ENCODE measurements at regions of chr12 and their contacts with region 1.

Region 1: DNA sequence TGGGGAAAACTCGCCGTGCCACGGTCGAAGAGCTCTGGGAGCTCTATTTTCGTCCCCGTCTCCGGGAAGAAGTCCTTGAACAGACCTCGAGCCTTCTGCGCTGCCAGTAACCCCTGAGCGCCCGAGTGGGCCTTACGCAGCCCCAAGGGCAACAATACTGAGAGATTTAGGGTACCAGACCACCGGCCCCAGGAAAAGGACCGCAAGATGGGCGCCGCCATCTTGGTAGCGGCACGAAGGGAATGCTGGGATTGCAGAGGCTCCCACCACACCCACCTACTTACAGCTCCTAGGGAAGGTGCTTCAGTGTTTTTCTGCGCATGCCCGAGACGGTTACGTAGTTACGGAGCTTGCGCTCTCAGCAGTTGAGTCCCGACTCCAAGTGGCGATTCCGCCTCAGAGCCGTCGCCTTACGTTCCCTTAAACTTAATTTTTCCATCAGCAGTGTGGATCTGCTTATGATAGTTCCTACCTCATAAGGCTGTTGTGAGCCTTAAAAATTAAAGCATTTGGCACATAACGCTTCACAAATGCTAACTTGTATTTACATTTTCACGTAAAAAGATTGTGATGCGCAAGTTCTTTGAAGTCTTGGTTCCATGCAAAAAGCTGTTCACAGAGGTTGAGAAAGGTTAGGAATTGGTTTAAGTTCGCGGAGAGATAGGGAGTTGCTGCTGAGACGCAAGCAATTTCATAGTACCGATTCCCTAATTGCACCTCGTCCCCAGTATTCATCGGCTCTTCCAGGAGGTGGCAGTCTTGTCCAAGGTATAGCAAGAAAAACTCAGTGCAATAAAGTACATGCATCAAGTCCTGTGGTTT is at the start of gene YARS2:
- DNase-seq: peak; percentile 95
- H3K4me3 Mint-ChIP-seq: peak within 1 kb of the TSS; percentile 89
- H3K27ac Mint-ChIP-seq: peak within 1 kb of the TSS; percentile 92
- H3K4me1 Mint-ChIP-seq: peaks cover 16% of the 10 kb centered on the region
- H3K27me3 Mint-ChIP-seq: no peaks in the 10 kb centered on the region
- total RNA-seq, gene YARS2: 20.1 to 24.8 TPM

Region 2: DNA sequence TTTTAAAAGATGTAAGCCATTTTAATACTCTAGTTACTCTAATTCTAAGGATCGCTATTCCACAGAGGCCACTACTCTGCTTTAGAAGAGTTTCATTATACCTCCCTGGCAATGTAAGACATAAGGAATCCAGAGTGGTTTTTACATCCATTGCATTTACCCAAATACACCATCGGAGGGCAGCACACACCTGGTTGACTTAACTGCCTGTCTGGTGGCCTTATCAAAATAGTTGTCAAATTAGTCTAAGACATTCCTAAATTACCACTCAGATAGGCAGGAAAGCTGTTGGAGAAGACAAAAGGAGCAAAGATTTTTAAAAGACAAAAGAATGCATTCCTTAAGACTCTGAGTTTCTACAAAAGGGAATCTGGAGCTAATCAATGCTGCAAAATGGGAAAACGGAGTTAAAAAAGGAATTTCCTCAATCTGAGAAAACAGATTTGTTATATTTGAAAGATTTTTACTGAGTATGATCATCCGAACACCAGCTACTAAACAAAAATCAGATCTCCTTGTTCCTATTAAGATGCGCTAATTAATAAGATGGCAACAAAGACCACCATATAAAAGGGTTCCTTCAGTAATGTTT is 390.3 kb before region 1 on chr12:
- CTCF ChIA-PET with region 1: no interaction called
- intact Hi-C with region 1: loop called (anchors 1 kb)
- DNase-seq: peak; percentile 69
- H3K4me3 Mint-ChIP-seq: no peak overlapping the region
- H3K27ac Mint-ChIP-seq: no peak overlapping the region
- H3K4me1 Mint-ChIP-seq: no peaks in the 10 kb centered on the region
- H3K27me3 Mint-ChIP-seq: no peaks in the 10 kb centered on the region

Region 3: GRCh38 chr12:32586390-32586789 is 169.5 kb before region 1 on chr12:
- CTCF ChIA-PET with region 1: interaction called, 4 read pairs
- intact Hi-C with region 1: loop called (anchors 1 kb)
- DNase-seq: no peak
- H3K4me3 Mint-ChIP-seq: no peak overlapping the region
- H3K27ac Mint-ChIP-seq: no peak overlapping the region
- H3K4me1 Mint-ChIP-seq: peaks cover 48% of the 10 kb centered on the region
- H3K27me3 Mint-ChIP-seq: no peaks in the 10 kb centered on the region

Region 4: DNA sequence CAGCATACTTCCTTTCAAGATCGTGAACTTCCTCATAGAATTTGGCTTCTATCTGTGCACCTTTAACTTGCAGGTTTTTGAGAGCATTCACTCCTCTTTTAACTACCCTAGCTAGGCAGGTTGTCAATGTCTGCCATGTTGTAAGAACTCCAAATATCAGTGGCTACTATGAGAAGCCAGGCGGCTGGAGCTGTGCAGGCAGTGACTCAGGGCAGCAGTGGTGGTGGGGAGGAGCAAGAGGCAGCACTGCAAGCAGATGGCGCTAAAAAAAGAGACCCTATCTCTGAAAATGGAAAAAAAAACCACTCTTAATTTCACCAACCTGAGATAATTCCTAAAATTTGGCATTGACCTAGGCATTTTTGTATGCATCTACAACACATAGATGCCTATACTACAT is 28.6 kb before region 1 on chr12:
- CTCF ChIA-PET with region 1: interaction called, 14 read pairs
- intact Hi-C with region 1: no loop called
- DNase-seq: no peak
- H3K4me3 Mint-ChIP-seq: no peak overlapping the region
- H3K27ac Mint-ChIP-seq: no peak overlapping the region
- H3K4me1 Mint-ChIP-seq: no peaks in the 10 kb centered on the region
- H3K27me3 Mint-ChIP-seq: no peaks in the 10 kb centered on the region

Region 5: GRCh38 chr12:33605751-33606150 is 849.9 kb after region 1 on chr12:
- CTCF ChIA-PET with region 1: no interaction called
- intact Hi-C with region 1: loop called (anchors 10 kb)
- DNase-seq: no peak
- H3K4me3 Mint-ChIP-seq: no peak overlapping the region
- H3K27ac Mint-ChIP-seq: no peak overlapping the region
- H3K4me1 Mint-ChIP-seq: no peaks in the 10 kb centered on the region
- H3K27me3 Mint-ChIP-seq: no peaks in the 10 kb centered on the region

Region 6: DNA sequence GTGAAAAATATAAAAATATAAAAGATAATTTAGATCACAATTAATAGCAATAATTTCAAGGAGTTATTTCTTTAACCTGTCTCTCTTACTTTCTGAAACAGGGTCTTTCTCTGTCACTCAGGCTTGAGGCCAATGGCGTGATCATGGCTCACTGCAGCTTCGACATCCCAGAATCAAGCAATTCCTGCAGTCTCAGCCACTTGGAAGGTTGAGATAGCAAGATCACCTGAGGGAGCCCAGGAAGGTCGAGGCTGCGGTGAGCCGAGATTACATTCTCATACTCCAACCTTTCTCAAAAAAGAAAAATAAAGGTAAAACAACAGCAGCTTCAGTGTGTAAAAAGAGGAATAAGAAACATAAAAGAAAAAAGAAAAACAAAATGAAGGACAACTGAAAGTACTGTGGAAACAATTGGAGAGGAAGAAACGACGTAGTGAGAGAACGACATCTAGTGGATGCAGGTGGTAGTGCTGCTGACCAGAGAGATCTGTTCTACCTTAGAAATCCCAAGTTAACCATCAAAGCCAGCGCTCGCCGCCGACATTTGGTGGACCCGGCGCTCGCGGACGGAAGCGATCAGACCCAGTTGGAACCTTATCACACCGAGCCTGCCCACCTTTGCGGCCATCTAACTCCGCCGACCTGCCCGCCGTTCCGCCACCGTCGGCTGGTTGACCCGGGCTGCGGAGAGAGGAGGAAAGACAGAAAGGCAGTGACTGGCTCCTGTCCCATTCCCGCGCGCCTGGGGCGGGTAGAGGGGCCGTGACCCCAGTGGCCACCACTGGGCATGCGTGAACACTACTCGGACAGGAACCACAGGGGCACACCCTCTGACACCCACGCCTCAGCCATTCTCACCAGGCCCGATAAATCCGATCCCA is 1462.5 kb after region 1 on chr12:
- CTCF ChIA-PET with region 1: no interaction called
- intact Hi-C with region 1: loop called (anchors 1 kb)
- DNase-seq: peak; percentile 78
- H3K4me3 Mint-ChIP-seq: peak overlapping the region; percentile 23
- H3K27ac Mint-ChIP-seq: no peak overlapping the region
- H3K4me1 Mint-ChIP-seq: peaks cover 4% of the 10 kb centered on the region
- H3K27me3 Mint-ChIP-seq: peaks cover 15% of the 10 kb centered on the region

Measured in activated naive CD4-positive, alpha-beta T cell treated with anti-CD3 and anti-CD28 coated beads for 36 hours (primary cell).